Endothelial cell of umbilical vein (primary cell): ENCODE measurements at regions of chr1 and their contacts with region 1.

Region 1: DNA sequence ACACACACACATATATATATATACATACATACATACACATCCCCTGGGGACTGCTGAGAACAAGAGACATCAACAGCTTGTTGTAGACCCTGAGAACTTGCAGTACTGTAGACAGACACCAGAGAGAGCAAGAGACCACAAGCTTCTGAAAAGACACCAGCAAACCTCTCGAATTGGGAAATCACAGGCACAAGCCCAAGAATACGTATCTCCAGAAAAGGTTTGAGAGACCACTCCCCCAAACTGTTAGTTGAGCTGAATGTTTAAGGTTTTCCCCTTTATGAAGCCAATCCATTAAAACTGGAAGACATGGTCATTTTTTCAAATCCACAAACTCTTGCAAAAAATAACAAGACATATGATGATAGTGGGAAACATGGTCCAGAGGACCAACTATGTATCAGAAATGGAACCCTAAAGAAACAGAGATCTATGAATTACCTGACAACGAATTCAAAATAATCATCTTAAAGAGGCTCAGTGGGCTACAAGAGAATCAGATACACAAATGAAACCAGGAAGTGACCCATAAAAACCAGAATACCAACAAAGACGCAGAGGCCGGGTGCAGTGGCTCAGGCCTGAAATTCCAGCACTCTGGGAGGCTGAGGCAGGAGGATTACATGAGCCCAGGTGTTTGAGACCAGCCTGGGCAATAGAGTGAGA is 45.1 kb downstream of the SLC2A1 start:
- DNase-seq: peak; percentile 85
- H3K4me3 ChIP-seq: no peak overlapping the region
- H3K27ac ChIP-seq: no peak overlapping the region
- H3K4me1 ChIP-seq: no peaks in the 10 kb centered on the region
- H3K27me3 ChIP-seq: peaks cover 4% of the 10 kb centered on the region in 2 experiments
- CTCF ChIP-seq: peak; percentile 62 to 75
- POLR2A ChIP-seq: no peak

Region 2: DNA sequence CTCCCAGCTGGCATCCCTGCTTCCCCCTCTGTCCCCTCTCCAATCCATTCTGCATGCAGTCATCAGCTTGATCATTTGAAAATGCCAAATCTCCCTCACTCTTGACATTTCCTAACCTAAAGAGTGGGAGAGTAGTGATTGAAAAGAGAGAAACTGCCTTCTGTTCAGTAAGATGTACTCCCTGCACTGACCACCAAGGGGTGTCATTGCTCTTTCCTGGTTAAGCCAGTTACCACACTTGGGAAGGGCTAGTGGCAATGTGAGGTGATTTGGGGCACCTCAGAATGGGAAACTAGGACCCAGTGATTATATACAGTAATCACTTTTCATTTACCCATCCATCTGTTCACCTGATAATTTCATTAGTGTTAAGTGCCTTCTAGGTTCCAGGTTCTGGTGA is 135.7 kb before region 1 on chr1:
- CTCF ChIA-PET with region 1: interaction called, 55 read pairs
- POLR2A ChIA-PET with region 1: no interaction called
- dilution Hi-C with region 1: no loop called
- intact Hi-C with region 1: loop called (anchors 1 kb)
- DNase-seq: peak; percentile 54
- H3K4me3 ChIP-seq: no peak overlapping the region
- H3K27ac ChIP-seq: no peak overlapping the region
- H3K4me1 ChIP-seq: no peaks in the 10 kb centered on the region
- H3K27me3 ChIP-seq: no peaks in the 10 kb centered on the region
- CTCF ChIP-seq: peak; percentile 59 to 67
- POLR2A ChIP-seq: no peak

Region 3: GRCh38 chr1:42820813-42821212 is 92.7 kb before region 1 on chr1:
- CTCF ChIA-PET with region 1: no interaction called
- POLR2A ChIA-PET with region 1: no interaction called
- dilution Hi-C with region 1: no loop called
- intact Hi-C with region 1: no loop called
- DNase-seq: no peak
- H3K4me3 ChIP-seq: no peak overlapping the region
- H3K27ac ChIP-seq: no peak overlapping the region
- H3K4me1 ChIP-seq: peaks cover 12% of the 10 kb centered on the region
- H3K27me3 ChIP-seq: no peaks in the 10 kb centered on the region
- CTCF ChIP-seq: no peak
- POLR2A ChIP-seq: no peak

Region 4: DNA sequence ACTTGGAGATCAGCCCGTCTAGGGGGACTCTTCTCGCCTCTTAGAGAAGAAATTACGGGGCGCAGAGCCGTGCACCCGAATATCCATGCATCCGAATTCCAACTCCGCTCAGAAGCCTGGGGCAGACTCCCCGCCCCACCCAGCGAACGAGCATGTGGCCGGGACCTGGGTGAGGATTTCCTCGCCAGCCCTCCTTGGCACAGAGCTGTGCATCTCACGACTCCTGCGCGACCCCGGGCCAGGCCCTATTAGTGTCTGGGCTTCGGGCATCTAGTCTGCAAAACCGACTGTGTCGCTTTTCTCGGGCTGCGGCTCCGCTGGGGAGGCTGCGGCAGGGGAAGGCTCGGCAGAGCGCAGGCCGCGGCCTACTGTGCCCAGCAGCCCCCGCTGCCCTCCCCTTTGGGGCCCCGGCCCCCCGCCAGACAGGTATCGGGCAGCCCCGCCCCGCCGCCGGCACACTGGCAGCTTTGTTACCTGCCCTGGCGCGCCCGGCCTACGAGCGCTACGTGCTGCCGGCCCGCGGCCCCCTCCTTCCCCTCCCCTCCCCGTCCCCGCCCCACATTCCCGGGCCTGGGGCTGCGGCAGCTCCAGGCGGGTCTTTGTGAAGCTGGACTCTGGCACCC is 93.7 kb after region 1 on chr1:
- CTCF ChIA-PET with region 1: no interaction called
- POLR2A ChIA-PET with region 1: interaction called, 13 read pairs
- dilution Hi-C with region 1: no loop called
- intact Hi-C with region 1: no loop called
- DNase-seq: no peak
- H3K4me3 ChIP-seq: no peak overlapping the region
- H3K27ac ChIP-seq: no peak overlapping the region
- H3K4me1 ChIP-seq: no peaks in the 10 kb centered on the region
- H3K27me3 ChIP-seq: peaks cover 6 to 16% of the 10 kb centered on the region in 2 experiments
- CTCF ChIP-seq: no peak
- POLR2A ChIP-seq: no peak

Region 5: GRCh38 chr1:43082740-43083139 is 169.2 kb after region 1 on chr1:
- CTCF ChIA-PET with region 1: interaction called, 1,298 read pairs
- POLR2A ChIA-PET with region 1: no interaction called
- dilution Hi-C with region 1: no loop called
- intact Hi-C with region 1: no loop called
- DNase-seq: no peak
- H3K4me3 ChIP-seq: no peak overlapping the region
- H3K27ac ChIP-seq: no peak overlapping the region
- H3K4me1 ChIP-seq: no peaks in the 10 kb centered on the region
- H3K27me3 ChIP-seq: no peaks in the 10 kb centered on the region
- CTCF ChIP-seq: no peak
- POLR2A ChIP-seq: no peak

Region 6: GRCh38 chr1:43129426-43129825 is 215.9 kb after region 1 on chr1:
- CTCF ChIA-PET with region 1: no interaction called
- POLR2A ChIA-PET with region 1: no interaction called
- dilution Hi-C with region 1: no loop called
- intact Hi-C with region 1: no loop called
- DNase-seq: no peak
- H3K4me3 ChIP-seq: no peak overlapping the region
- H3K27ac ChIP-seq: no peak overlapping the region
- H3K4me1 ChIP-seq: no peaks in the 10 kb centered on the region
- H3K27me3 ChIP-seq: peaks cover 8 to 30% of the 10 kb centered on the region in 2 experiments
- CTCF ChIP-seq: no peak
- POLR2A ChIP-seq: no peak